ENCODE measurements at regions of chr4 and their contacts with region 1.

Region 1: GRCh38 chr4:40205259-40206198 is 8.7 kb downstream of the RHOH start:
- DNase-seq: no peak
- H3K4me3 ChIP-seq: no peak overlapping the region
- H3K27ac ChIP-seq: no peak overlapping the region
- H3K4me1 ChIP-seq: peaks cover 8% of the 10 kb centered on the region; the same call in 1 of the 2 replicates
- H3K27me3 ChIP-seq: no peaks in the 10 kb centered on the region
- CTCF ChIP-seq: no peak

Region 2: GRCh38 chr4:40121515-40121914 is 84.0 kb before region 1 on chr4:
- CTCF ChIA-PET with region 1: no interaction called
- POLR2A ChIA-PET with region 1: interaction called, 10 read pairs
- intact Hi-C with region 1: no loop called
- DNase-seq: peak in 1 of 2 experiments; percentile 7
- H3K4me3 ChIP-seq: no peak overlapping the region
- H3K27ac ChIP-seq: peak overlapping the region; percentile 37
- H3K4me1 ChIP-seq: peaks cover 7% of the 10 kb centered on the region
- H3K27me3 ChIP-seq: no peaks in the 10 kb centered on the region
- CTCF ChIP-seq: no peak

Region 3: DNA sequence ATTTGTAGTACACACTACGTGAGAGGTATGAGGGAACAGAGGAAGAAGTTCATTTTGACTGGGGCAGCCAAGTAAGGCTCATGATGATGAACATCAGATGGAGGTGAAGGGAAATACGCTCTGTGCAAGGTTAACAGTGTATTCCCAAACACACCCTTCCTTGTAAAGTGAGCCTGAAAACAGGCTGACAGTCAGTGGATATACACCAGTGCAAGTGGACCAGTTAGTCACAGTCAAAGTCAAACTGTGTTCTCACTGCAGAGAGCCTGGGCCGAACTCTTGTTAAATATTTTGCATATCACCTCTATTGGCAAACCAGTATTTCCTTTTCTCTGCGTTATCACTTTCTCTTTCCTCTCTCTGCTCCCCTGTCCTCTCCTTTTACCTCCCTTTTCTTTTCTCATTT is 32.1 kb before region 1 on chr4:
- CTCF ChIA-PET with region 1: no interaction called
- POLR2A ChIA-PET with region 1: no interaction called
- intact Hi-C with region 1: no loop called
- DNase-seq: no peak
- H3K4me3 ChIP-seq: no peak overlapping the region
- H3K27ac ChIP-seq: no peak overlapping the region
- H3K4me1 ChIP-seq: no peaks in the 10 kb centered on the region
- H3K27me3 ChIP-seq: no peaks in the 10 kb centered on the region
- CTCF ChIP-seq: no peak

Measured in PC-9 (cell line).